ENCODE measurements at regions of chr2 and their contacts with region 1.

Region 1: GRCh38 chr2:218898109-218898878 is 17.6 kb downstream of the WNT10A start:
- DNase-seq: peak; percentile 56 to 87 (median 76)
- ATAC-seq: peak; percentile 14
- H3K4me3 ChIP-seq: peak overlapping the region; percentile 61
- H3K4me3 Mint-ChIP-seq: peak overlapping the region; percentile 88
- H3K27ac ChIP-seq: peak overlapping the region in 1 of 2 donors; percentile 74
- H3K27ac Mint-ChIP-seq: peak overlapping the region; percentile 91
- H3K4me1 ChIP-seq: peaks cover 53% of the 10 kb centered on the region
- H3K4me1 Mint-ChIP-seq: peaks cover 45% of the 10 kb centered on the region
- H3K27me3 ChIP-seq: peaks cover 10 to 24% of the 10 kb centered on the region in 2 experiments
- H3K27me3 Mint-ChIP-seq: peaks cover 41% of the 10 kb centered on the region
- CTCF ChIP-seq: peak; percentile 99

Region 2: DNA sequence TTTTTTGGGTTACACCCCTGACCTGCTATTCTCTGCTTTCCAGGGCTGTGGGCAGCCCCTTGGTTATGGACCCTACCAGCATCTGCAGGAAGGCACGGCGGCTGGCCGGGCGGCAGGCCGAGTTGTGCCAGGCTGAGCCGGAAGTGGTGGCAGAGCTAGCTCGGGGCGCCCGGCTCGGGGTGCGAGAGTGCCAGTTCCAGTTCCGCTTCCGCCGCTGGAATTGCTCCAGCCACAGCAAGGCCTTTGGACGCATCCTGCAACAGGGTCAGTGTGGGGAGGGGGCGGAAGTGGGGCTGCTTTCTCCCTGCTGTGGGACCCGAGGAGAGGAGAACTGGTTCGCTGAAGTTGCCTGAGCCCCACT is 27.3 kb before region 1 on chr2:
- CTCF ChIA-PET with region 1: interaction called, 500 read pairs
- POLR2A ChIA-PET with region 1: interaction called, 455 read pairs
- intact Hi-C with region 1: loop called (anchors 1 kb)
- DNase-seq: peak in 3 of 14 experiments; percentile 25 to 35 (median 31)
- ATAC-seq: no peak
- H3K4me3 ChIP-seq: peak overlapping the region; percentile 49
- H3K4me3 Mint-ChIP-seq: peak overlapping the region; percentile 60
- H3K27ac ChIP-seq: no peak overlapping the region
- H3K27ac Mint-ChIP-seq: no peak overlapping the region
- H3K4me1 ChIP-seq: peaks cover 35% of the 10 kb centered on the region
- H3K4me1 Mint-ChIP-seq: peaks cover 30% of the 10 kb centered on the region
- H3K27me3 ChIP-seq: peaks cover 35 to 42% of the 10 kb centered on the region in 2 experiments
- H3K27me3 Mint-ChIP-seq: peaks cover 67% of the 10 kb centered on the region
- CTCF ChIP-seq: no peak

Region 3: DNA sequence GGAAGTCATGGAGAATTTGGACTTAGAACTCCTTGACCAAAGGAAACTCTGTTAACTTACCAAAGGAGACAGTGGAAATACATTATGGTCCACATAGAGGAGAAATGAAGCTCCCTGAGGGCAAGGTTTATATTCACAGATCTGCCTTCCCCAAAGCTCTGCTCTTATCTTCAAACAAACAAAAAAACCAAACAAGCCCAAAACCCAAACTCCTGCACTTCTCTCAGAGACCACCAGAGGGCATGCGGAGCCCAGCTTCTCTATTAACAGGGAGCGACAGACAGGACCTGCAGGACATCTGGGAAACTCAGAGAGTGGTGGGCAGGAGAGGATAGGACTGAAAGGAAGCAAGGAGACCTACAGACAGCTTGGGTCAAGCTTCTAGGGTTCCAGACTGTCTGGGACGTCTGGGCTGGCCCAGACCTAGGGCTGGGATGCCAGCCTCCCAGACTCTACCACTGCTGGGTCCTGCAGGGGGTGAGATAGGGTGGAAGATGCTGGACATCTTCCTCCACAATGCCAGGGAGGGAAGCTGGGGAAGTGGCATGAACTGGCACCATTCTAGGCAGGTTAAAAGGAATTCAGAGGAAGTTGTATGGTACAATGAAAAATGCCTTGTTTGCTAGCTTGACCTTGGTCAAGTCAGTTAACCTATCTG is 21.6 kb before region 1 on chr2:
- CTCF ChIA-PET with region 1: interaction called, 500 read pairs
- POLR2A ChIA-PET with region 1: interaction called, 455 read pairs
- intact Hi-C with region 1: loop called (anchors 1 kb)
- DNase-seq: peak; percentile 54 to 87 (median 73)
- ATAC-seq: no peak
- H3K4me3 ChIP-seq: no peak overlapping the region
- H3K4me3 Mint-ChIP-seq: peak overlapping the region; percentile 8
- H3K27ac ChIP-seq: no peak overlapping the region
- H3K27ac Mint-ChIP-seq: peak overlapping the region; percentile 6
- H3K4me1 ChIP-seq: peaks cover 78% of the 10 kb centered on the region
- H3K4me1 Mint-ChIP-seq: peaks cover 54% of the 10 kb centered on the region
- H3K27me3 ChIP-seq: peaks cover 29 to 36% of the 10 kb centered on the region in 2 experiments
- H3K27me3 Mint-ChIP-seq: peaks cover 45% of the 10 kb centered on the region
- CTCF ChIP-seq: peak; percentile 98

Region 4: DNA sequence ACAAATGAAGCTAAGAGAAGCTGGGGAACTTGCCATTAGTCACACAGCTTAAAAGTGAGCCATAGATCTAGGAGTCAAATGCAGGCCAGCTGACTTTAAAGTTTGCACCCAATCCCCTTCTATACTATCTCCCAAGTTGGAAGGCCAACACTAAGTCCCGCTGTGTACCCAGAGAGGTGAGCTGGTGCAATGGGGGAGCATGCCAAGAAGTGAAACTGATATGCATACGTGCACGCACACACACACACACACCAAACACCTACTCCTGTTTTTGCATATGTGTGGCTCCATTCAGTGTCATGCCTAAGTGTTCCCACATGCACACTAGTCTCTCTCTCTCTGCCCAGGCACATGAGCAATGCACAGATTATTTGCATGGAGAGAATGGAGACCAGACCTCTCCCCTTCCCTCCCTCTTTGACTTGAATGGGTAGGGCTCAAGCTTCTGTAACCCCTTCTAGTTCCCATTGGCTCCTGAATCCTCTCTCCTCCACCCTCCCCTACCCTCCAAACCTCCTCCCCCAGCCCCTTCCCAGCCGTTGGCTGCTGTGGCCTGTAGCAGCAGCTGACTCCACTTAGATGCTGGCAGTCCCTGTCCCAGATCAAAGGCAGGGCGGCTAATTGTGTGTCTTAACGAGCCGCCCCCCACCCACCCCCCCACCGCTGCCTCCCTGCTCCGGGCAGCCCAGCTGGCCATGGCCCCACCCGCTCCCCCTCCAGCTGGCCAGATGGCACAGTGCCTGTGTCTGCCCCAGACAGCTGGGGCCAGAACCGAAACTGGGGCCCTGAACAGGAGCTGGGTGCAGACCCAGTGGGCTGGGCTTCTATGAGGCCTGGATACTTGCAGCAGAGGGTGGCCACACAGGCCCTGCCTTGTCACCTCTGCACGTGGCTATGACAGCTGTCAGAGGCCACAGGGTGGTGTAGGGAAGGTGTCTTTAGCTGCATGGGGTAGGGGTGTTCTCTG is 12.0 kb before region 1 on chr2:
- CTCF ChIA-PET with region 1: interaction called, 500 read pairs
- POLR2A ChIA-PET with region 1: interaction called, 455 read pairs
- intact Hi-C with region 1: no loop called
- DNase-seq: no peak
- ATAC-seq: no peak
- H3K4me3 ChIP-seq: no peak overlapping the region
- H3K4me3 Mint-ChIP-seq: no peak overlapping the region
- H3K27ac ChIP-seq: no peak overlapping the region
- H3K27ac Mint-ChIP-seq: no peak overlapping the region
- H3K4me1 ChIP-seq: peaks cover 42% of the 10 kb centered on the region
- H3K4me1 Mint-ChIP-seq: peaks cover 43% of the 10 kb centered on the region
- H3K27me3 ChIP-seq: no peaks in the 10 kb centered on the region
- H3K27me3 Mint-ChIP-seq: no peaks in the 10 kb centered on the region
- CTCF ChIP-seq: no peak

Region 5: GRCh38 chr2:218908721-218909619 is 10.7 kb after region 1 on chr2:
- CTCF ChIA-PET with region 1: interaction called, 35 read pairs
- POLR2A ChIA-PET with region 1: interaction called, 4 read pairs
- intact Hi-C with region 1: loop called in 1 of 2 experiments (anchors 1 kb)
- DNase-seq: peak; percentile 78 to 95 (median 84)
- ATAC-seq: peak; percentile 100
- H3K4me3 ChIP-seq: peak overlapping the region; percentile 68
- H3K4me3 Mint-ChIP-seq: peak overlapping the region; percentile 85
- H3K27ac ChIP-seq: no peak overlapping the region
- H3K27ac Mint-ChIP-seq: peak overlapping the region; percentile 78
- H3K4me1 ChIP-seq: peaks cover 15% of the 10 kb centered on the region
- H3K4me1 Mint-ChIP-seq: peaks cover 13% of the 10 kb centered on the region
- H3K27me3 ChIP-seq: peaks cover 4 to 8% of the 10 kb centered on the region in 2 experiments
- H3K27me3 Mint-ChIP-seq: peaks cover 41% of the 10 kb centered on the region
- CTCF ChIP-seq: no peak

Region 6: GRCh38 chr2:218979846-218980734 is 81.8 kb after region 1 on chr2:
- CTCF ChIA-PET with region 1: interaction called, 19 read pairs
- POLR2A ChIA-PET with region 1: no interaction called
- intact Hi-C with region 1: no loop called
- DNase-seq: peak; percentile 71 to 90 (median 79)
- ATAC-seq: peak; percentile 88
- H3K4me3 ChIP-seq: peak overlapping the region; percentile 25
- H3K4me3 Mint-ChIP-seq: peak overlapping the region; percentile 83
- H3K27ac ChIP-seq: no peak overlapping the region
- H3K27ac Mint-ChIP-seq: no peak overlapping the region
- H3K4me1 ChIP-seq: peaks cover 51% of the 10 kb centered on the region
- H3K4me1 Mint-ChIP-seq: peaks cover 39% of the 10 kb centered on the region
- H3K27me3 ChIP-seq: peaks cover 48 to 80% of the 10 kb centered on the region in 2 experiments
- H3K27me3 Mint-ChIP-seq: peaks cover 90% of the 10 kb centered on the region
- CTCF ChIP-seq: peak; percentile 89

Region 7: GRCh38 chr2:218995972-218996711 is 97.8 kb after region 1 on chr2:
- CTCF ChIA-PET with region 1: interaction called, 10 read pairs
- POLR2A ChIA-PET with region 1: no interaction called
- intact Hi-C with region 1: no loop called
- DNase-seq: peak; percentile 58 to 86 (median 72)
- ATAC-seq: peak; percentile 81
- H3K4me3 ChIP-seq: peak overlapping the region; percentile 14
- H3K4me3 Mint-ChIP-seq: no peak overlapping the region
- H3K27ac ChIP-seq: no peak overlapping the region
- H3K27ac Mint-ChIP-seq: no peak overlapping the region
- H3K4me1 ChIP-seq: peaks cover 36% of the 10 kb centered on the region
- H3K4me1 Mint-ChIP-seq: peaks cover 18% of the 10 kb centered on the region
- H3K27me3 ChIP-seq: peaks cover 81 to 83% of the 10 kb centered on the region in 2 experiments
- H3K27me3 Mint-ChIP-seq: peaks cover 86% of the 10 kb centered on the region
- CTCF ChIP-seq: peak; percentile 82

Region 8: GRCh38 chr2:219020604-219021365 is 122.5 kb after region 1 on chr2:
- CTCF ChIA-PET with region 1: no interaction called
- POLR2A ChIA-PET with region 1: no interaction called
- intact Hi-C with region 1: no loop called
- DNase-seq: no peak
- ATAC-seq: no peak
- H3K4me3 ChIP-seq: no peak overlapping the region
- H3K4me3 Mint-ChIP-seq: no peak overlapping the region
- H3K27ac ChIP-seq: no peak overlapping the region
- H3K27ac Mint-ChIP-seq: no peak overlapping the region
- H3K4me1 ChIP-seq: no peaks in the 10 kb centered on the region
- H3K4me1 Mint-ChIP-seq: no peaks in the 10 kb centered on the region
- H3K27me3 ChIP-seq: no peaks in the 10 kb centered on the region
- H3K27me3 Mint-ChIP-seq: peaks cover 27% of the 10 kb centered on the region
- CTCF ChIP-seq: no peak

Measured in CD4-positive, alpha-beta T cell (primary cell).